Psoas muscle (tissue), 8 donors: ENCODE measurements at regions of chr7 and their contacts with region 1.

Region 1: DNA sequence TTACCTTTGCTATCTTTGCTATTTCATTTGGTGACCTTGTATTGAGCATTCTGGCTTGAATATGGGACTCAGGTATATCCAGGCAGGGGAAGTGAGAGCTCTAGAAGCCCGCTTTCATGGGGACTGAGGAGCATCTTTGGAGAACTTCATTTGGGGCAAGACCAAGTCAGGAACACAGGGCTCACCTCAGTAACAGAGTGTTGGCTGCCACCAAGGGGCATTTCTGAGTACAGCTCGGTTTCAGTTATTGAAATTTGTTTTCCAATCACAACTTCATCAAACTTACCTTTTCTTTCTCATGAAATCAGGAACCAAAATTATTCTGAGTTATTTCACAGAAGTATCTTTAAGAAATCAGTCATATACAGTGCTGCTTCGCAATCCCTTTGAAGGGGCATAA is 337.2 kb downstream of the C7orf25 start:
- DNase-seq: no peak
- ATAC-seq: no peak
- H3K4me3 ChIP-seq: no peak overlapping the region
- H3K27ac ChIP-seq: no peak overlapping the region
- H3K4me1 ChIP-seq: no peaks in the 10 kb centered on the region
- H3K27me3 ChIP-seq: peaks cover 0 to 4% (median 0%) of the 10 kb centered on the region in 3 donors
- CTCF ChIP-seq: peak; percentile 11

Region 2: GRCh38 chr7:42254202-42254601 is 320.5 kb before region 1 on chr7:
- intact Hi-C with region 1: loop called in 1 of 2 experiments (anchors 5 kb)
- DNase-seq: no peak
- ATAC-seq: peak in 3 of 4 donors; percentile 62 to 70 (median 66)
- H3K4me3 ChIP-seq: no peak overlapping the region
- H3K27ac ChIP-seq: no peak overlapping the region
- H3K4me1 ChIP-seq: no peaks in the 10 kb centered on the region
- H3K27me3 ChIP-seq: no peaks in the 10 kb centered on the region
- CTCF ChIP-seq: no peak

Region 3: DNA sequence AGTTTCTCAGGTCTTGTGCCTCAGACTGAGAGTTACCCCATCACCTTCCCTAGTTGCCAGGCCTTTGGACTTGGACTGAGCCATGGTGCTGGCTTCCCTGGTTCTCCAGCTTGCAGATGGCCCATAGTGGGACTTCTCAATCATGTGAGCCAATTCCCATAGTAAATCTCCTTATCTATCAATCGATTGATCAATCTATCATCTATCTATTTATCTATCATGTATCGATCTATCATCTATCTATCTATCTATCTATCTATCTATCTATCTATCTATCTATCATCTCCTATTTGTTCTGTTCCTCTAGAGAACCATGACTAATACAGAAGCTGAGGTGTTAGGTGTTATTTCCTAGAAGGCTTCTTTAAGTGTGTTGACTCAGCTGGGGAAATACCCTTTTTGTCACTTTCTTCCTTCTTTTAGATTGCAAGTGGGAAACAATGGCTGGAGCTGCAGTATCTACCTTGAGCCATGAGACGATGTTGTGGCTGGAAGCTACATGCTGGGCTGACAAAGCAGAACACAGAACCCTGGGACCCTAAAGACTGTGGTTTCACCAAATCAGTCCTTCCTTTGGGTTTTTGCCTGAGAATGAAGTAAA is 103.0 kb before region 1 on chr7:
- intact Hi-C with region 1: no loop called
- DNase-seq: no peak
- ATAC-seq: no peak
- H3K4me3 ChIP-seq: no peak overlapping the region
- H3K27ac ChIP-seq: no peak overlapping the region
- H3K4me1 ChIP-seq: no peaks in the 10 kb centered on the region
- H3K27me3 ChIP-seq: no peaks in the 10 kb centered on the region
- CTCF ChIP-seq: no peak